K562 (cell line): ENCODE measurements at regions of chr3 and their contacts with region 1.

Region 1: DNA sequence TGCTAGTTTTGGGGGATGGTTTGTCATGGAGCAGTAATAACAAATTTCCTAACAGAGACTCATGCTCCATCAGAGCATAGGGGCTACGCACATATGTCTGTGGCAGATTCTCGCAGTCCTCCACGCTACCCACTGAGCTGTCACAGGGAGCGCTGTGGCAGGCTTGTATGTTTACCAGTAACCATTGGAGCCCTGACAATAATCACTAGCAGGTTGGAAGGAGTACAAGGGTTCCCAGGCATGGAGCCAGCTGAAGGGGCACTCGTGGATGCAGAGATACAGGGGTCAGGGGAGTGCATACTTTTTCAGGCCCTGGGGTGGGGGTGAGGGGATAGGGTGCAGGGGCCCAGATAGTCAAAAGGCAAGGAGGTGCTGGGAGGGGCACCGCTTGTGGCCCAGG is 7.9 kb upstream of the GP9 start:
- DNase-seq: peak in 1 of 4 experiments; percentile 9
- ATAC-seq: no peak
- H3K4me3 ChIP-seq: no peak overlapping the region
- H3K27ac ChIP-seq: no peak overlapping the region
- H3K4me1 ChIP-seq: peaks cover 33 to 38% of the 10 kb centered on the region in 2 experiments; a peak in 4 of 5 replicates
- H3K27me3 ChIP-seq: no peaks in the 10 kb centered on the region
- CTCF ChIP-seq: no peak
- EP300 ChIP-seq: no peak
- POLR2A ChIP-seq: no peak
- RAD21 ChIP-seq: no peak

Region 2: GRCh38 chr3:129016356-129016719 is 36.3 kb before region 1 on chr3:
- CTCF ChIA-PET with region 1: interaction called, 3 read pairs
- POLR2A ChIA-PET with region 1: interaction called, 3 read pairs
- in situ Hi-C with region 1: no loop called
- intact Hi-C with region 1: loop called (anchors 2 kb)
- DNase-seq: no peak
- ATAC-seq: no peak
- H3K4me3 ChIP-seq: no peak overlapping the region
- H3K27ac ChIP-seq: peak overlapping the region; percentile 62
- H3K4me1 ChIP-seq: peaks cover 24 to 36% of the 10 kb centered on the region in 2 experiments
- H3K27me3 ChIP-seq: no peaks in the 10 kb centered on the region
- CTCF ChIP-seq: no peak; a peak in 1 of 6 replicates
- EP300 ChIP-seq: no peak
- POLR2A ChIP-seq: no peak
- RAD21 ChIP-seq: no peak

Region 3: DNA sequence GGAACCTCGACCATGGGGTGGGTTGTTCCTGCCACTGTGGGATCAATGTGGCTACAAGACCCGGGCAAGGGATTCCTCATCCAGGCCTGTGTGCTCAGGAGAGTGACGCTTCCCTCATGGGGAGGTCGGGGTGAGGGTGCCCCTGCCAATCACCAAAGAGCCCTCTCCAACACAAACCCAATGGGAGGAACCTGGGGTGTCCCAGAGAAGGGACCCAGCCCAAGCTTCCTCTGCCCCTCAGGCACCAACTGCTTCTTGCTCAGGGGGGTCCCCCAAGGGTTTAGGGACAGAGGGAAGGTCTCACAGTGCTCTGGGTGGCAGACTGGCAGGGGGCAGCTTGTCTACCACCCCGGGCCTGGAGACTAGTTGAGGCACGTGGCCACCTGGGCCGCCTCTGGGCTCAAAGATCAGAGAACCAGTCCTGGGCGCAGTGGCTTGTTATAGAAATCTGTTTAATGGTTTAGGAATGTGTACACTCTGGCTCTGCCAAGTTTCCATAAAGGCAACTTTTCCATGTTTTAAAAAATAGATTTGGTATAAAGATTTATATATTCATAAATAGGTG is 34.5 kb after region 1 on chr3:
- CTCF ChIA-PET with region 1: no interaction called
- POLR2A ChIA-PET with region 1: no interaction called
- in situ Hi-C with region 1: no loop called
- intact Hi-C with region 1: loop called (anchors 2 kb)
- DNase-seq: no peak
- ATAC-seq: no peak
- H3K4me3 ChIP-seq: no peak overlapping the region
- H3K27ac ChIP-seq: no peak overlapping the region
- H3K4me1 ChIP-seq: peaks cover 0 to 10% of the 10 kb centered on the region in 2 experiments; a peak in 3 of 5 replicates
- H3K27me3 ChIP-seq: no peaks in the 10 kb centered on the region
- CTCF ChIP-seq: no peak
- EP300 ChIP-seq: no peak
- POLR2A ChIP-seq: no peak
- RAD21 ChIP-seq: no peak

Region 4: DNA sequence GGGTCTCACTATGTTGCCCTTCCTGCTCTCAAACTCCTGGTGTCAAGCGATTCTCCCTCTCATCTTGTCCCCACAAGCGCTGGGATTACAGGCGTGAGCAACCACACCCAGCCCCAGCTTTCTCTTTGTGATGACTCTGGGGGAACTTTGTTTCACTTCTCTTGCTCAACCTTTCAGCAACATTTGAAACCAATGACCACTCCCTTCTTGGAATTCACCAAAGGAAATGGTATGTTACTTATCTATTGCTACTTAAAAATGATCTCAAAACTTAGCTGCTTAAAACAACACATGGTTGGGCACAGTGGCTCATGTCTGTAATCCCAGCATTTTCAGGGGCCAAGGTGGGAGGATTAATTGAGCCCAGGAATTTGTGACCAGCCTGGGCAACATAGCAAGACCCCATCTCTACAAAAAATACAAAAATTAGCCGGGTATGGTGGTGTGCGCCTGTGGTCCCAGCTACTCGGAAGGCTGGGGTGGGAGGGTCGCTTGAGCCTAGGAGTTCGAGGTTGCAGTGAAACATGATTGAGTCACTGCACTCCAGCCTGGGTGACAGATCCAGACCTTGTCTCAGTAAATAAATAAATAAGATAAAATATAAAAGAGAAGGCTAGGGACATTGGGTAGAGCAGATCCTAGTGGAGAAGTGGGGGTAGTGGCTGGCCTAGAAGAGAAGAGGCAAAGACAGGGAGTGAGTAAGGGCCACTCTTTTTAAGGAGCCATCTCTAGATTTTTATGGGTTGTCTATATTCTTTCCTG is 186.5 kb after region 1 on chr3:
- CTCF ChIA-PET with region 1: interaction called, 3 read pairs
- POLR2A ChIA-PET with region 1: interaction called, 3 read pairs
- in situ Hi-C with region 1: loop called (anchors 5 kb)
- intact Hi-C with region 1: no loop called
- DNase-seq: peak in 3 of 4 experiments; percentile 9 to 75 (median 40)
- ATAC-seq: peak; percentile 87
- H3K4me3 ChIP-seq: 0 out of 2 replicates have a peak overlapping the region, but pooled peaks have one; percentile 4
- H3K27ac ChIP-seq: peak overlapping the region; percentile 67; the same call in 2 of the 3 replicates
- H3K4me1 ChIP-seq: peaks cover 8 to 29% of the 10 kb centered on the region in 2 experiments; a peak in 4 of 5 replicates
- H3K27me3 ChIP-seq: no peaks in the 10 kb centered on the region
- CTCF ChIP-seq: no peak; a peak in 1 of 6 replicates
- EP300 ChIP-seq: peak; percentile 54
- POLR2A ChIP-seq: no peak
- RAD21 ChIP-seq: peak in 1 of 2 experiments; percentile 12; a peak in 2 of 4 replicates

Region 5: DNA sequence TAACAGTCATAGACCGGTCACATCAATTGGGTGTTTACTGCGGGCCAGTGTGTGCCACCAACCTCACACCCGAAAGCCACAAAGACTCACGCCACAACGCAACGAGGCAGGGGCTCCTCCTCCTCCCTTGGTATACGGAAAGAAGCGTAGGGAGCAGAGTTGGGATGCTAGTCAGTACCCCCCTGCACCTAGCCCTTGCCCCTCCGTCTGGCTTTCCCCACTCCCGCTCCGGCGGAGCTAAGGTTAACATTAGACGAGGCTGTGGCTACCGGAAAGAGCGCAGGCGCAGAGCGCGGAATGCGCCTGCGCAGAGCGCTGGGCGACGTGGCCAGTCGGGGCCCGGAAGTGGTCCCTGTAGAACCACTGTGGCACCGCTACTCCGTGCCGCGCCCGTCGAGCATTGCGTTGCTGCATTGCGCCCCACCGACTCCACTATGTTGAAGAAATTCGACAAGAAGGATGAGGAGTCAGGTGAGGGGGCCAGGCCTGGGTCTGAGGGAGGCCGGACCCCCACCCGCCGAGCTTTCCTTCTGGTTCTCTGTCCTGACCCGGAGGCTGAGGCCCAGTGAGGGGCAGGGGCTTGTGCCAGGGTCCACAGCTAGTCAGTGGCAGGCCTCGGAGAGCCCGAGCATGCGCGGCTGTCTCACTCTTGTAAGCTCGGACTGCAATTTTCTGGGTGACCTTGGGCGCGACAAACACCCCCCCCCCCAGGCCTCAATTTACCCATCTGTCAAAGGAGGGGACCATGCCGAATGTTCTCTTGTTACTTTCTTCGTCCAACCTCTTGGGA is 196.8 kb after region 1 on chr3 and contains the start of gene COPG1:
- CTCF ChIA-PET with region 1: interaction called, 3 read pairs
- POLR2A ChIA-PET with region 1: no interaction called
- in situ Hi-C with region 1: loop called (anchors 5 kb)
- intact Hi-C with region 1: loop called (anchors 5 kb)
- DNase-seq: peak; percentile 89 to 93 (median 92)
- ATAC-seq: peak; percentile 90
- H3K4me3 ChIP-seq: peak within 1 kb of the TSS; percentile 92
- H3K27ac ChIP-seq: peak within 1 kb of the TSS; percentile 96
- H3K4me1 ChIP-seq: peaks cover 10 to 17% of the 10 kb centered on the region in 2 experiments; a peak in 3 of 5 replicates
- H3K27me3 ChIP-seq: no peaks in the 10 kb centered on the region
- CTCF ChIP-seq: no peak
- EP300 ChIP-seq: peak; percentile 13; the same call in 1 of the 2 replicates
- POLR2A ChIP-seq: peak; percentile 92
- RAD21 ChIP-seq: no peak
- polyA plus RNA-seq, gene COPG1: 40.6 to 105 TPM

Region 6: DNA sequence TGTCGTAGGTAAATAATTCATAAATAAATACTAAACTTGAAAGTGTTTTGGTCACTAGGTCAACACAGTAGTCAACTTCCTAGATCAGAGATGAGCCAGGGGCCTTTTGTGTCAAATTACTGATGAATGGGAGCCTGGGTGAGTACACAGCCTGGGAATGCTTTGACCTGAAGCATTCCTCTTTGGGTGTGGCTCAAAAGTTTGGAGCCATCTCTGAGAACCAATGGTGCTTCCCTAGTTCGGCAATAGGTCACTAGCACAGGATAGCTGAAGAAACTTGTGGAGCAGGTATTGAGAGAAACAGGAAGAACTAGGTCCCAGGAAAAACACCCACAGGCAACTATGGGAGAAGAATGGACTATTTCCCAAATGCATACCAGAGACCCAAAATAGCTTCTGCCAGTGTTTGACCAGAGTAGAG is 610.4 kb after region 1 on chr3:
- CTCF ChIA-PET with region 1: no interaction called
- POLR2A ChIA-PET with region 1: no interaction called
- in situ Hi-C with region 1: no loop called
- intact Hi-C with region 1: no loop called
- DNase-seq: no peak
- ATAC-seq: no peak
- H3K4me3 ChIP-seq: no peak overlapping the region
- H3K27ac ChIP-seq: no peak overlapping the region
- H3K4me1 ChIP-seq: peaks cover 0 to 4% of the 10 kb centered on the region in 2 experiments; a peak in 2 of 5 replicates
- H3K27me3 ChIP-seq: no peaks in the 10 kb centered on the region
- CTCF ChIP-seq: no peak
- EP300 ChIP-seq: no peak
- POLR2A ChIP-seq: no peak
- RAD21 ChIP-seq: no peak